ENCODE measurements at regions of chr2 and their contacts with region 1.

Region 1: GRCh38 chr2:101341901-101342624 is 33.6 kb upstream of the RNF149 start:
- DNase-seq: peak; percentile 82
- CTCF ChIP-seq: peak; percentile 80

Region 2: DNA sequence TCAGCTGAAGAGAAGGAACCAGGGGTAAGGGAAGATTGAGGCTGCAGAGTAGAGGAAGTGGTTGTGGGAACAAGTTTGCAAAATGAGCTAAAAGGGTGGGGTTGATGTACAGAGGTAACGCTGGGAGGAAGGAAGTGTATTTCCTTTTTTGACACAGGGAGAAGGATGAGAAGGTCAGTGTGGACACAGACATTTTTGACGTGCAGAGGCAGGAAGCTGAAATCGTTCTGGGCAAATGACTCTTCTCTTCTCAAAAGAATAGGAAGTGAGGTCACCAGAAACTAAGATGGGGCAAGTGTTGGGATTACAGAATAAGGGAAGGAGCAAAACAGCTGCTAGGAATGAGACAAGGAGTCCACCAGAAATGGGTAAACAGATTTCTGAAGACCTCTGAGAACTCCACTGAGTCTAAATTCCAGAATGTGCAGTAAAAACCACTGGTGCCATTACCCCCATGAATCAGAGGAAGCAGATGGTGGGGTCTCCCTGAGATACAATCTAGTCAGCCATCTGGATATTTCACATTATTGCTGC is 13.5 kb before region 1 on chr2:
- CTCF ChIA-PET with region 1: interaction called, 40 read pairs
- POLR2A ChIA-PET with region 1: no interaction called
- DNase-seq: no peak
- CTCF ChIP-seq: no peak

Region 3: GRCh38 chr2:101354925-101355324 is 12.9 kb after region 1 on chr2:
- CTCF ChIA-PET with region 1: interaction called, 14 read pairs
- POLR2A ChIA-PET with region 1: no interaction called
- DNase-seq: no peak
- CTCF ChIP-seq: no peak

Region 4: GRCh38 chr2:101361121-101361870 is 19.2 kb after region 1 on chr2:
- CTCF ChIA-PET with region 1: interaction called, 14 read pairs
- POLR2A ChIA-PET with region 1: no interaction called
- DNase-seq: no peak
- CTCF ChIP-seq: no peak